Upper lobe of right lung (tissue), 1 donor: ENCODE measurements at regions of chr12 and their contacts with region 1.

Region 1: GRCh38 chr12:50504798-50505385 is at the start of gene DIP2B:
- DNase-seq: peak; percentile 98
- ATAC-seq: peak; percentile 99
- H3K4me3 ChIP-seq: peak within 1 kb of the TSS; percentile 93
- H3K27ac ChIP-seq: peak within 1 kb of the TSS; percentile 94
- H3K4me1 ChIP-seq: peaks cover 41% of the 10 kb centered on the region
- H3K27me3 ChIP-seq: no peaks in the 10 kb centered on the region
- CTCF ChIP-seq: peak; percentile 92
- total RNA-seq, gene DIP2B: 28.6 TPM

Region 2: DNA sequence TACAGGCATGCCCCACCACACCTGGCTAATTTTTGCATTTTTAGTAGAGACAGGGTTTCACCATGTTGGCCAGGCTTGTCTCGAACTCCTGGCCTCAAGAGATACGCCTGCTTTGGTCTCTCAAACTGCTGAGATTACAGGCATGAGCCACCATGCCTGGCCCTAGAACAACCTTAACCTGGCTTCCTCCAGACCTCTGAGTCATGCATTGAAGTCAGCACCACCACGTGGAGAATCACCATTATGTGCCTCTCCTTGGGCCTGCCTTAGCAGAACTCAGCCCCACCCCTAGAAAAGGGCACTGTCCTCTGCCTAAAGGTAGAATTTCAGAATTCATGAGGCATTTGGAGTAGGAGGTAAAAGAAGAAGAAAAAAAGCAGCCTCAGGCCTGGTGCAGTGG is 270.5 kb before region 1 on chr12:
- intact Hi-C with region 1: no loop called
- DNase-seq: no peak
- ATAC-seq: peak; percentile 59
- H3K4me3 ChIP-seq: no peak overlapping the region
- H3K27ac ChIP-seq: no peak overlapping the region
- H3K4me1 ChIP-seq: peaks cover 6% of the 10 kb centered on the region
- H3K27me3 ChIP-seq: no peaks in the 10 kb centered on the region
- CTCF ChIP-seq: no peak

Region 3: DNA sequence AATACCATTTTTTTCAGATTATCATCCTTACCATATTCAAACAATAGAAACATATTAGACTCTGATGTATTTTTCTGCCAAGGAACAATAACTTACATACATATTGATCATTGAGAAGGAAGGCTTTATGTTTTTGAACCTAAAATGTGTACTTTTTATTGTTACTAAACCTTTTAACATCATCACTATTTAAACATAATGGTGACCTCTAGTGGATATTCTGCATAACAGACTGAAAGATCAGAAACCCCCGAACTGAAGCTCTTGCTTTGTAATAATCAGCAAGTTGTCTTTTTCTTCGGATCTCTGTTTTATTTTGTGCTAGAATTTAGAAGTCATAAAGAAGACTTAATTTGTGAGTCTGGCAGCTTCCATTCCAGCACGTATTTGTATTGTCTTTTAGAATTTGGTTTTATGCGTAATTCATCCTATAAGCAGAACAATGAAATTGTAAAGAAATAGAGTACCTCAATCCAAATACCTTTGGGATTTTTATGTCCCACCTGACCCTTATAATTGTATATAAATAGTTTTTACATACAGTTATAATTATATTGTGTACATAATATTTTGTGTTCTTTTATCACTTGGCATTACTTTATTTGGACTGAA is 133.1 kb after region 1 on chr12:
- intact Hi-C with region 1: loop called (anchors 10 kb)
- DNase-seq: no peak
- ATAC-seq: peak; percentile 57
- H3K4me3 ChIP-seq: no peak overlapping the region
- H3K27ac ChIP-seq: no peak overlapping the region
- H3K4me1 ChIP-seq: peaks cover 13% of the 10 kb centered on the region
- H3K27me3 ChIP-seq: no peaks in the 10 kb centered on the region
- CTCF ChIP-seq: peak; percentile 71